ENCODE measurements at regions of chr18 and their contacts with region 1.

Region 1: GRCh38 chr18:21053127-21053526 is 58.5 kb downstream of the ROCK1 start:
- DNase-seq: no peak
- ATAC-seq: peak; percentile 70 to 90
- H3K4me3 ChIP-seq: no peak overlapping the region
- H3K27ac ChIP-seq: peak overlapping the region in 2 of 4 donors; percentile 2 to 49
- H3K4me1 ChIP-seq: peaks cover 45 to 61% of the 10 kb centered on the region in 2 donors
- H3K27me3 ChIP-seq: no peaks in the 10 kb centered on the region
- CTCF ChIP-seq: no peak
- POLR2A ChIP-seq: no peak

Region 2: GRCh38 chr18:21012308-21012707 is 40.8 kb before region 1 on chr18:
- in situ Hi-C with region 1: loop called in 1 of 4 experiments (anchors 5 kb)
- intact Hi-C with region 1: no loop called
- DNase-seq: no peak
- ATAC-seq: no peak
- H3K4me3 ChIP-seq: no peak overlapping the region
- H3K27ac ChIP-seq: no peak overlapping the region
- H3K4me1 ChIP-seq: no peaks in the 10 kb centered on the region
- H3K27me3 ChIP-seq: no peaks in the 10 kb centered on the region
- CTCF ChIP-seq: no peak
- POLR2A ChIP-seq: no peak

Region 3: GRCh38 chr18:21100146-21100545 is 47.0 kb after region 1 on chr18:
- in situ Hi-C with region 1: no loop called
- intact Hi-C with region 1: loop called (anchors 5 kb)
- DNase-seq: no peak
- ATAC-seq: no peak
- H3K4me3 ChIP-seq: no peak overlapping the region
- H3K27ac ChIP-seq: no peak overlapping the region
- H3K4me1 ChIP-seq: peaks cover 46 to 54% of the 10 kb centered on the region in 2 donors
- H3K27me3 ChIP-seq: no peaks in the 10 kb centered on the region
- CTCF ChIP-seq: no peak
- POLR2A ChIP-seq: no peak

Region 4: DNA sequence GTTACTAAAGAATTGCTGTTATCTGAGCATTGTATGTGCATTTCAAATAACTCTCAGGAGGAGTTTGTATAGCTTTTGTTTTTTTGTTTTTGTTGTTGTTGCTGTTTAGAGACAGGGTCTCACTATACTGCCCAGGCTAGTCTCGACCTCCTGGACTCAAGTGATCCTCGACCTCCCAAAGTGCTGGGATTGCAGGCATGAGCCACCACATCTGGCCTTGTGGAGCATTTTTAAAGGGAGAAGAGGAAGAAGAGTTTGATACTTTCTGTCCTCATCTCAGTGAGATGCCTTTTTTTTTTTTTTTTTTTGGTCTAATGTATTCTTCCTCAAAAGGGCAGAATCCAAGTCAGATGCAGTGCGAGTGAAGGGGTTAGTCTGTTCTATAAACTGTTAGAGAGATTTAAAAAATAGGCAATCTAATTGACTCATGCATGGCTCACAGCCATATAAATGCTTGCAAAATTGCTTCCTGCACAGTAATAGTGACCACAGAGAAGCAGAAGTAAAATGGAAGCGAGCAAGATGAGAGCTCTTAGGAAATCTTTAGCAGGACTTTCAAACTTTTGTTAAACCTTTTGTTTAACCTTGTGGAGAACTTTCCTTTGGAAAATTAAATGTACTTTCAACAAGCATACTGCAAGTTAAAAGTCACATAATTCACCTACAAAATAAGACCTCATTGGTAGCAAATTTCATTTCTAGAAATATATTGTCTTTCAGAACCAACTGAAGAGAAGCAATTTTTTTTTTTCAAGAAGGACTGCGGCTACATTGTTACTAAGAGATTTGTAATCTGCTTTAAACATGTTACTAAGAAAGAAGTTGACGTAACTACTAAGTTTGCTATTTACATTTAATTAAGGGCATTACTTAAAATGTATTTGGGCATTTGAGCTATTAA is 110.8 kb after region 1 on chr18:
- in situ Hi-C with region 1: loop called in 1 of 4 experiments (anchors 25 kb)
- intact Hi-C with region 1: no loop called
- DNase-seq: no peak
- ATAC-seq: peak; percentile 33 to 56
- H3K4me3 ChIP-seq: no peak overlapping the region
- H3K27ac ChIP-seq: peak overlapping the region in 1 of 4 donors; percentile 16
- H3K4me1 ChIP-seq: no peaks in the 10 kb centered on the region
- H3K27me3 ChIP-seq: no peaks in the 10 kb centered on the region
- CTCF ChIP-seq: no peak
- POLR2A ChIP-seq: no peak

Region 5: GRCh38 chr18:21663578-21663977 is 610.5 kb after region 1 on chr18:
- in situ Hi-C with region 1: no loop called
- intact Hi-C with region 1: no loop called
- DNase-seq: peak in 1 of 2 donors; percentile 29
- ATAC-seq: no peak
- H3K4me3 ChIP-seq: no peak overlapping the region
- H3K27ac ChIP-seq: no peak overlapping the region
- H3K4me1 ChIP-seq: no peaks in the 10 kb centered on the region
- H3K27me3 ChIP-seq: no peaks in the 10 kb centered on the region
- CTCF ChIP-seq: no peak
- POLR2A ChIP-seq: no peak